H1 (cell line): ENCODE measurements at regions of chr1 and their contacts with region 1.

Region 1: DNA sequence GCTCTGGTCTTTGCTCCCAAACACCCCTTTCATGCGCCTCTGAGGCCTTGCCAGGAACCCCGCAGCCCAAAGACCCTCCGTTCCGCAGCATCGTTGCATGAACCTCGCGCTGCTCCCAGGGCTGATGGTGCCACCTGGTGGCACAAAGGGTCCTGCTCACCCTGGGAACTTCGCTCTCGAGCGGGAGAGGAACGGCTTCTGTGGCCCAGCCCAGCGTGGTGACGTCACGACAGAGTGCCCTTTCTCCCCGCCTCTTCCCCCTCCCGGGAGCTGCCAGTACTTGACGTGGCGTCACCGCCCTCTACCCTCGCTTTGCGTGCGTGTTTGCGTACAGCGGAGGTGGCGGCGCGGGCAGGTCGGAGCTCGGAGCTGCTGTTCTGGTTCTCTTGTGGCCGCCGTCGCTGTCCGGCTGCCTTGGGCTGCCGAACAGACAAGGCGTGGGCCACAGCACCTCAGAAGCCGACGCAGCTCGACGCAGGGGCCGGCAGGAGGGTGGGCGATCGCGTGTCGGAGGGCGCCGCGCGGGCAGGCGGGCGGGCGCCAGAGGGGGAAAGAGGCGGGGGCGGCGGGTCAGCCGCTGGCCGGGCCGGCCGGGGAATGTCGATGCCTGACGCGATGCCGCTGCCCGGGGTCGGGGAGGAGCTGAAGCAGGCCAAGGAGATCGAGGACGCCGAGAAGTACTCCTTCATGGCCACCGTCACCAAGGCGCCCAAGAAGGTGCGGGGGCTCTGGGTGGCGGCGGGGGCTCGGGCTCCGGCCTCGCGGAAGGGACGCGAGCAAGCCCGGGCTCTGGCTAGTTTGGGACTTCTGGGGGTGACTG is at the start of gene AHCYL1:
- DNase-seq: peak; percentile 97
- H3K4me3 ChIP-seq: peak within 1 kb of the TSS; percentile 40 to 82 (median 78)
- H3K27ac ChIP-seq: peak within 1 kb of the TSS; percentile 86
- H3K4me1 ChIP-seq: peaks cover 4 to 12% (median 9%) of the 10 kb centered on the region in 4 experiments; a peak in 6 of 7 replicates
- H3K27me3 ChIP-seq: no peaks in the 10 kb centered on the region
- CTCF ChIP-seq: peak; percentile 94 to 98 (median 96)
- EP300 ChIP-seq: no peak
- POLR2A ChIP-seq: peak; percentile 82 to 86
- RAD21 ChIP-seq: peak; percentile 99
- total RNA-seq, gene AHCYL1: 92.5 and 95.9 TPM in 2 replicates

Region 2: DNA sequence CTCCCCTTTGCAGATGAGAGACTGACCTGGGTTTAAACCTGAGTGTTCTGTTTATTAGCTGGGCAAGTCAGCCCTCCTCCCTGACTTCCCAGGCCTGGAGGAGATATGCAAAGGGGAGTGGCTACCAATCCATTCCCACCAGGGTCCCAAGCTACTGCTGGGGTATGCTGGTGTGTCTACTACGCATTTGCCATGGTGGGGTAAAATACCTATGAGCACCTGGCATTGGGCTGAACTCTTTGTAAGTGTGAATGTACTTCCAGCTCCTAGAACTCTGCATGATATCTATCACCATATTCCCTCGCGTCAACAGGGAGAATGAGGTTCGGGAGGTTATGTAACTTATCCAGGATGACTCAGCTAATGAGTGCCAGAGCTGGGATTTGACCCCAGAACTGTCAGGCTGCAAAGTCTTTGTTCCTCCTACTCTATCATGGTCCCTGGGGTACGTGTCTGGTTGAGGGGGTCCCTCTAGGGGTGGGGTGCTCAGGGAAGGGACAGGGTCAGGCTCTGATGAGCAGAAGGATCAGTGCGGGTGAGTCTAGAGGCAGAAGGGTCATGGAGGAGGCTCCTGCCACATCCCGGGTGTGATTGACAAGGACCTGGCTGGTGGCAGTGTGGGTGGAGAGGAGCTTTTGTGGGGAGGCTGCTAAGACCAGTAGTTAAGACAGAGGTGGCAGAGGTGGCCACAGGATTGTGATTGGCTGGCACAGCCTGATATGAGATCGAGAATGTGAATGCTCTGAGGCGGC is 348.3 kb before region 1 on chr1:
- CTCF ChIA-PET with region 1: interaction called, 25 read pairs
- POLR2A ChIA-PET with region 1: interaction called, 3 read pairs
- DNase-seq: peak in 1 of 2 experiments; percentile 53
- H3K4me3 ChIP-seq: no peak overlapping the region; a peak in 1 of 8 replicates
- H3K27ac ChIP-seq: no peak overlapping the region
- H3K4me1 ChIP-seq: peaks cover 5 to 8% (median 6%) of the 10 kb centered on the region in 4 experiments; a peak in 6 of 7 replicates
- H3K27me3 ChIP-seq: no peaks in the 10 kb centered on the region; a peak in 1 of 7 replicates
- CTCF ChIP-seq: no peak
- EP300 ChIP-seq: no peak
- POLR2A ChIP-seq: no peak
- RAD21 ChIP-seq: no peak

Region 3: DNA sequence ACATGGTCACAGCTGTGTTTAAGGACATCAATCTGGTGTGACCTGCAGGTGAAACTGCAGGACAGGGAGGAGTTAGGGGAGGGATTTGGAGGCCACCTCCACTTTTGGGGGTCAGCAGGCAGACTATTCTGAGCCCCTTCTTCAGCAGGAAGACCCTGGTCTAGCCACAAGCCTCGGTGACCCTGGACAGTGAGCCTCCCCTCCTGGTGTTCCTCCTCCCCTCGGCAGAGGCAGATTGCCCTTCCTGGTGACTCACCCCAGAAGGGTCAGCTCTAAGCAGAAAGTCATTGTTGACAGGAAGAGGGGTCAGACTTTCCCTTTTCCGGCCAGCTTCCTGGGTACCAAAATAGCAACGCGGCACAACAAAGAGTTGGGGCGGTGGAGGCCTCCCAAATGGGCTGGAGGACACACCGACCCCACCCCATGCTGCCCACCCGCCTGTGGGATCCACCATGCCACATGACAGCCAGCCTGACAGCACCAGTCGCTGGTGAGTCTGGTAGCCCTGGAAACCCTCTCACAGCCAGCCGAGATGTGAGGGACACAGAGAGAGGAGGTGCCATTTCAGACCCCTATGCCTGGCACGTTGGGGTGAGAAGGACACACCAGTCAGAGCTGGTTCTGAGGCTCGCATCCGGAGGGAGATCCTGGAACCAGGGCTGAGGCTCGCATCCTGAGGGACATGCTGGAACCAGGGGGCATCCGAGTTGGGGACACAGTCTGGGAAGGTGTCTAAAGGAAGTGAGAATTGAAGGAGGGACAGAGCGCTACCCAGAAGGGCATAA is 88.8 kb before region 1 on chr1:
- CTCF ChIA-PET with region 1: interaction called, 10 read pairs
- POLR2A ChIA-PET with region 1: interaction called, 4 read pairs
- DNase-seq: no peak
- H3K4me3 ChIP-seq: no peak overlapping the region
- H3K27ac ChIP-seq: no peak overlapping the region
- H3K4me1 ChIP-seq: peaks cover 0 to 3% (median 0%) of the 10 kb centered on the region in 4 experiments; a peak in 2 of 7 replicates
- H3K27me3 ChIP-seq: no peaks in the 10 kb centered on the region; a peak in 1 of 7 replicates
- CTCF ChIP-seq: no peak
- EP300 ChIP-seq: no peak
- POLR2A ChIP-seq: no peak
- RAD21 ChIP-seq: no peak

Region 4: DNA sequence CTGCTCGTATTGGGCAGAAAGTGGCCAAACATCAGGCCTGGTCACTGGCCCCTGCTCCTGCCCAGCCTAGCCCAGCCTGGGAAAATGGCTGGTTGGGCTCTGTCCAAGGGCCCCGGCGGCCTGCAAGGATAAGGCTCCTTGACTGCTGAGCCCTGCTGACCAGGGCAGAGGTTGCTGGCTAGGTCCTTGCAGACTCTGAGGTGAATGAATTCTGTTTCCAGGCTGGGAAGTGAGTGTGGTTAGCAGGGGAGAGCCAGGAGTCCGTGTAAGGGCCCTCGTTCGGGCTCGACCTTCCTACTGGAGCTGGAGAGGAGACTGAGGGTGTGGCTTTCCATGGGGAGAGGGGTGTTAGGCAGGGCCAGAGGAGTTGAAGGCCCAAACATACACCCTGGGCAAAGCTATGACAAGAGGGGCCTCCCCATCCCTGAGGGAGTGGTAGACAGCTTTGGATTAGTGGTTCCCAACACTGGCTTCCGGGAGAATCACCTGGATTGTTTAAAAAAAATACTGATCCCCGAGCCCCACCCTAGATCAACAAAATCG is 53.4 kb before region 1 on chr1:
- CTCF ChIA-PET with region 1: interaction called, 333 read pairs
- POLR2A ChIA-PET with region 1: interaction called, 15 read pairs
- DNase-seq: peak; percentile 60 to 89
- H3K4me3 ChIP-seq: no peak overlapping the region
- H3K27ac ChIP-seq: peak overlapping the region; percentile 59; the same call in 1 of the 2 replicates
- H3K4me1 ChIP-seq: peaks cover 4 to 9% (median 5%) of the 10 kb centered on the region in 4 experiments; a peak in 6 of 7 replicates
- H3K27me3 ChIP-seq: no peaks in the 10 kb centered on the region
- CTCF ChIP-seq: no peak
- EP300 ChIP-seq: peak; percentile 67 to 79; a peak in 2 of 3 replicates
- POLR2A ChIP-seq: peak in 1 of 2 experiments; percentile 49; a peak in 1 of 3 replicates
- RAD21 ChIP-seq: peak; percentile 30 to 47; a peak in 3 of 4 replicates

Region 5: GRCh38 chr1:109971559-109971958 is 13.1 kb before region 1 on chr1:
- CTCF ChIA-PET with region 1: interaction called, 23 read pairs
- POLR2A ChIA-PET with region 1: no interaction called
- DNase-seq: no peak
- H3K4me3 ChIP-seq: no peak overlapping the region
- H3K27ac ChIP-seq: no peak overlapping the region
- H3K4me1 ChIP-seq: no peaks in the 10 kb centered on the region
- H3K27me3 ChIP-seq: no peaks in the 10 kb centered on the region
- CTCF ChIP-seq: no peak
- EP300 ChIP-seq: no peak
- POLR2A ChIP-seq: no peak
- RAD21 ChIP-seq: no peak

Region 6: GRCh38 chr1:110011527-110012041 is 26.9 kb after region 1 on chr1:
- CTCF ChIA-PET with region 1: interaction called, 39 read pairs
- POLR2A ChIA-PET with region 1: interaction called, 12 read pairs
- DNase-seq: peak in 1 of 2 experiments; percentile 49
- H3K4me3 ChIP-seq: no peak overlapping the region
- H3K27ac ChIP-seq: no peak overlapping the region
- H3K4me1 ChIP-seq: peaks cover 0 to 9% (median 5%) of the 10 kb centered on the region in 4 experiments; a peak in 3 of 7 replicates
- H3K27me3 ChIP-seq: no peaks in the 10 kb centered on the region
- CTCF ChIP-seq: peak; percentile 5 to 68 (median 47)
- EP300 ChIP-seq: no peak
- POLR2A ChIP-seq: no peak
- RAD21 ChIP-seq: peak; percentile 67 to 74